Panc1 (cell line): ENCODE measurements at regions of chr11 and their contacts with region 1.

Region 1: GRCh38 chr11:34647131-34647530 is 26.2 kb downstream of the EHF start:
- DNase-seq: no peak
- ATAC-seq: no peak
- H3K4me3 ChIP-seq: no peak overlapping the region
- H3K27ac ChIP-seq: peak overlapping the region; percentile 58; the same call in 1 of the 2 replicates
- H3K4me1 ChIP-seq: no peaks in the 10 kb centered on the region
- H3K27me3 ChIP-seq: no peaks in the 10 kb centered on the region
- CTCF ChIP-seq: no peak

Region 2: GRCh38 chr11:34468209-34468841 is 178.8 kb before region 1 on chr11:
- CTCF ChIA-PET with region 1: no interaction called
- POLR2A ChIA-PET with region 1: no interaction called
- in situ Hi-C with region 1: no loop called
- intact Hi-C with region 1: no loop called
- DNase-seq: peak; percentile 15
- ATAC-seq: peak; percentile 63; the same call in 1 of the 2 replicates
- H3K4me3 ChIP-seq: no peak overlapping the region
- H3K27ac ChIP-seq: no peak overlapping the region
- H3K4me1 ChIP-seq: no peaks in the 10 kb centered on the region
- H3K27me3 ChIP-seq: no peaks in the 10 kb centered on the region
- CTCF ChIP-seq: peak; percentile 89

Region 3: GRCh38 chr11:34827228-34827627 is 180.1 kb after region 1 on chr11:
- CTCF ChIA-PET with region 1: no interaction called
- POLR2A ChIA-PET with region 1: interaction called, 13 read pairs
- in situ Hi-C with region 1: no loop called
- intact Hi-C with region 1: no loop called
- DNase-seq: no peak
- ATAC-seq: no peak
- H3K4me3 ChIP-seq: no peak overlapping the region
- H3K27ac ChIP-seq: no peak overlapping the region
- H3K4me1 ChIP-seq: no peaks in the 10 kb centered on the region
- H3K27me3 ChIP-seq: no peaks in the 10 kb centered on the region
- CTCF ChIP-seq: no peak